T-cell (primary cell): ENCODE measurements at regions of chr2 and their contacts with region 1.

Region 1: GRCh38 chr2:3545788-3546478 is 12.2 kb downstream of the RNASEH1 start:
- DNase-seq: no peak
- ATAC-seq: no peak
- H3K4me3 ChIP-seq: no peak overlapping the region
- H3K4me3 Mint-ChIP-seq: no peak overlapping the region
- H3K27ac ChIP-seq: no peak overlapping the region
- H3K27ac Mint-ChIP-seq: no peak overlapping the region
- H3K4me1 ChIP-seq: no peaks in the 10 kb centered on the region
- H3K4me1 Mint-ChIP-seq: peaks cover 0 to 6% (median 0%) of the 10 kb centered on the region in 3 donors
- H3K27me3 ChIP-seq: no peaks in the 10 kb centered on the region
- H3K27me3 Mint-ChIP-seq: no peaks in the 10 kb centered on the region

Region 2: DNA sequence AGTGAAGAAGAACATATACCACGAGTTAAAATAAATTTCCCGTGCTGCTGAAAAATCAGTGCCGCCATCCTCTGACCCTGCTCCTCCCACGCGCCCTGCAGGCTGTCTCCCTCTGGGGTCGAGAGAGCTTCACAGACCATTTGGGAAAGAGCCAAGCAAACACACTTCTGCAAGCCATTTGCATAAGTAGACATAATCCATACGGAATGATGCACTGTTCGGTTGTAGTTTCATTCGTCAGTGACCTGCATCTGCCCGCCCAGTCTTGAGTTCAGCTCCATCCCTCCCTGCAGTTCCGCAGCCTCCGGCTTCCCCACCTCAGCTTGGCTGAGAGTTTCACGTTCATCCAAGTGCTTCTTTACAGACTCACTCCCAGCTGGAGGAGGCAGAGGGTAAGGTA is 96.8 kb before region 1 on chr2:
- CTCF ChIA-PET with region 1: no interaction called
- POLR2A ChIA-PET with region 1: no interaction called
- DNase-seq: no peak
- ATAC-seq: no peak
- H3K4me3 ChIP-seq: no peak overlapping the region
- H3K4me3 Mint-ChIP-seq: no peak overlapping the region
- H3K27ac ChIP-seq: no peak overlapping the region
- H3K27ac Mint-ChIP-seq: no peak overlapping the region
- H3K4me1 ChIP-seq: no peaks in the 10 kb centered on the region
- H3K4me1 Mint-ChIP-seq: no peaks in the 10 kb centered on the region
- H3K27me3 ChIP-seq: no peaks in the 10 kb centered on the region
- H3K27me3 Mint-ChIP-seq: no peaks in the 10 kb centered on the region

Region 3: DNA sequence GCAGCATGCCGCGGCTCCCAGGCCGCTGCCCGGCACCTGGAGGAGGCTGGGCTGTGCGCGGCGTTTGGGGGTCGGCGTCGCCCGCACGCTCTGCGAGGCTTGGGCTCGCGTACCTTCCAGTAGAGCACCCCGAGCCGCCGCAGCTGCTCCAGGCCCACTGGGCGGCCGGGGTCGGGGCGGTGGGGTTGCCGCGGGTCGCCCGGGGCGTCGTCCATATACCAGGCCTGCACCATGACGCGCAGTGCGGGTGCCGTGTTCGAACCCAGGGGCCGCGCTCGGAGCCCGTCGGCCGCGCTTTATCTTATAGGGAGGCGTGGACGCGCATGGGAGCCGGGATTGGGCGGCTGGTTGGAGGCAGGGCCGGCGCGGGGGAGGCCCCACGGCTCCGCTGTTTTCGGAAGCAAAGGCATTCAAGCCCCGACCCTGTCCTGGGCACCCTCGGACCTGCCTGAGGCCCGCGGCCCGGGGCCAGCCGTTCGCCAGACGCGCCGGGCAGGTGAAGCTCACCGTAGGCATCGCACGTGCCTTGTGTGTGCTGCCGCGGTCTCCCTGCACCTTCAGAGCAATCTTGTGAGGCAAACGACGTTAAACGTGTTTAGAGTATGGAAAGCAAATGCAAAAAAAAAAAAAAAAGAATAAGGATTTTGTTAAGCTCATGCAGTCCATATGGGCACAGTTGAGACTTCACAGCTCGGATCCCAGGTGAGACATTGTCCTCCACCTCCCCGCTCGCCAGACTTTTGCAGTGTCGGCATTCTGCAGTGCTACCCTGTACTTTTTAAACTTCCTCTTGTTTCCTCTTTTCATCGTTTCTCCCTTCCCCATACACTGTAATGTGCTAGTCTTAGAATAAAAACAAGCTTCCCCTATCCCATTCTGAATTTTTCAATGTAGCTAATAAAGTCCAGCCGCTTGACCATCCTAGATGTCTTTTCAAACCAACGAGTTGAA is 26.4 kb before region 1 on chr2 and contains the start of gene ADI1:
- CTCF ChIA-PET with region 1: no interaction called
- POLR2A ChIA-PET with region 1: interaction called, 3 to 12 read pairs
- DNase-seq: peak in 34 of 35 experiments; percentile 45 to 83 (median 68)
- ATAC-seq: peak; percentile 69 to 71 (median 70)
- H3K4me3 ChIP-seq: peak within 1 kb of the TSS; percentile 73 to 90
- H3K4me3 Mint-ChIP-seq: peak within 1 kb of the TSS; percentile 87 to 90 (median 89)
- H3K27ac ChIP-seq: peak within 1 kb of the TSS; percentile 90
- H3K27ac Mint-ChIP-seq: peak within 1 kb of the TSS; percentile 91 to 93
- H3K4me1 ChIP-seq: peaks cover 11 to 23% of the 10 kb centered on the region in 2 experiments
- H3K4me1 Mint-ChIP-seq: peaks cover 34 to 45% (median 40%) of the 10 kb centered on the region in 3 donors
- H3K27me3 ChIP-seq: no peaks in the 10 kb centered on the region
- H3K27me3 Mint-ChIP-seq: no peaks in the 10 kb centered on the region
- total RNA-seq, gene ADI1: 20.9 to 29.0 (median 28.3) TPM

Region 4: DNA sequence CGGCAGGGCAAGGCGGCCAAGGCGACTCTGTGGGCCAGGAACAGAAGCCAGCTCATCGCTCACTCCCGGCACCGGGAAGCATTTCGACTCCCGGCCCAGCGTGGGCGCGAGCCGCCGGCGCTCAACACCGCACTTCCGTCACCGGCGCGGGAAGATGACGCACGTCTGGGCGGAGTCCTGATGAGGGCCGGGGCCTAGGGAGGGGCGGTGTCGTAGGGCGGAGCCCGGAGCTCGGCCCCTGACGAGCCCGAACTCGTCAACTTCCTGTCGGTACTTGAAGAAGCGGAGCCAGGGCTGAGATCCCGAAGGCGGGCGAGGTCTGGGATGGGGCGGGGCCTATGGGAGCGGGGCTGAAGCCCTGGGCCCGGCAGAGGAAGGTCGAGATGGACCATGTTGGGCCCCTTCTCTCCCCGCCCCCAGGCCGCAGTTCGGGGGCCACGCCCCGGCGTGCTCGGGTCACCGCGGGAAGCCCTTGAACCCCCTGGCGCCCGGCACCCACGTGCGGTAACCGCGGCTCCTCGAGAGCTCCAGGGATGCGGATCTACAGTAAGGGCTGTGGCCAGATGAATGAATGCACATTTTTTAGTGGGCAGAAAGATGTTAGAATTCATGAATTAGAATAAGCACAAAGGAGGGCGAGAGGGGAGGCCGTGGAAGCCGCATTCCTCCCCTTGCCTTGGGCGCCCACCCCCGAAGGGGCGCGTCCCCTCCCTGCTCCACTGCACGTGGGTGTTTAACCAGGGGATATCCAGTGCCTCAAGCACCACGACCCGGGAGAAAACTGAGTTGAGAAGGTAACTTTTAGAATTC is 12.5 kb after region 1 on chr2 and contains the start of gene RNASEH1:
- CTCF ChIA-PET with region 1: no interaction called
- POLR2A ChIA-PET with region 1: interaction called in 1 of 2 experiments, 14 read pairs
- DNase-seq: peak; percentile 90 to 99 (median 96)
- ATAC-seq: peak; percentile 96 to 98 (median 98)
- H3K4me3 ChIP-seq: peak within 1 kb of the TSS; percentile 76 to 98
- H3K4me3 Mint-ChIP-seq: peak within 1 kb of the TSS; percentile 84 to 90 (median 87)
- H3K27ac ChIP-seq: peak within 1 kb of the TSS; percentile 92
- H3K27ac Mint-ChIP-seq: peak within 1 kb of the TSS; percentile 83 to 92
- H3K4me1 ChIP-seq: peaks cover 14 to 15% of the 10 kb centered on the region in 2 experiments
- H3K4me1 Mint-ChIP-seq: peaks cover 19 to 38% (median 32%) of the 10 kb centered on the region in 3 donors
- H3K27me3 ChIP-seq: no peaks in the 10 kb centered on the region
- H3K27me3 Mint-ChIP-seq: no peaks in the 10 kb centered on the region
- total RNA-seq, gene RNASEH1: 24.1 to 28.4 (median 25.2) TPM